ENCODE measurements at regions of chr11 and their contacts with region 1.

Region 1: DNA sequence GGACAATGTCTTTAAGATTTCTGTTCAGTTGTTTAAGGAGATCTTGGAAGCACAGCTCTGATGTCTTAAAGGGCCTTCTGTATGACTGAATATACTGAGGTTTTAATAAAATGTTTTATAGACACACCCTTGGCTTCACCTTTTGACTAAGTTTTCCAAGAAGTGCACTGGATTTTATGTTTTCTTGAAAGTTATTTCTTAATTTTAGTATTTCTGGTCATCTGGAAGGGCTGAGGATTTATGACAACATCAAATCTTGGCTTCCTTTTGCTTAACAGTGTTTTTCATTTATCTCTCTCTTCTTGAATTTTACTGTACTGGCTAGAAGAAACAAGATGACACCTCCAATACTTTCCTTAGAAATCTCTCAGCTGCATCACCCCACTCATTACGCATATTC is 2423.4 kb downstream of the LRRC4C start:
- DNase-seq: no peak
- H3K4me3 ChIP-seq: no peak overlapping the region
- H3K27ac ChIP-seq: no peak overlapping the region
- H3K4me1 ChIP-seq: no peaks in the 10 kb centered on the region
- H3K27me3 ChIP-seq: no peaks in the 10 kb centered on the region
- CTCF ChIP-seq: no peak

Region 2: GRCh38 chr11:37841016-37841415 is 1195.0 kb before region 1 on chr11:
- CTCF ChIA-PET with region 1: no interaction called
- POLR2A ChIA-PET with region 1: interaction called, 10 read pairs
- intact Hi-C with region 1: no loop called
- DNase-seq: no peak
- H3K4me3 ChIP-seq: no peak overlapping the region
- H3K27ac ChIP-seq: no peak overlapping the region
- H3K4me1 ChIP-seq: no peaks in the 10 kb centered on the region
- H3K27me3 ChIP-seq: no peaks in the 10 kb centered on the region
- CTCF ChIP-seq: no peak

Region 3: DNA sequence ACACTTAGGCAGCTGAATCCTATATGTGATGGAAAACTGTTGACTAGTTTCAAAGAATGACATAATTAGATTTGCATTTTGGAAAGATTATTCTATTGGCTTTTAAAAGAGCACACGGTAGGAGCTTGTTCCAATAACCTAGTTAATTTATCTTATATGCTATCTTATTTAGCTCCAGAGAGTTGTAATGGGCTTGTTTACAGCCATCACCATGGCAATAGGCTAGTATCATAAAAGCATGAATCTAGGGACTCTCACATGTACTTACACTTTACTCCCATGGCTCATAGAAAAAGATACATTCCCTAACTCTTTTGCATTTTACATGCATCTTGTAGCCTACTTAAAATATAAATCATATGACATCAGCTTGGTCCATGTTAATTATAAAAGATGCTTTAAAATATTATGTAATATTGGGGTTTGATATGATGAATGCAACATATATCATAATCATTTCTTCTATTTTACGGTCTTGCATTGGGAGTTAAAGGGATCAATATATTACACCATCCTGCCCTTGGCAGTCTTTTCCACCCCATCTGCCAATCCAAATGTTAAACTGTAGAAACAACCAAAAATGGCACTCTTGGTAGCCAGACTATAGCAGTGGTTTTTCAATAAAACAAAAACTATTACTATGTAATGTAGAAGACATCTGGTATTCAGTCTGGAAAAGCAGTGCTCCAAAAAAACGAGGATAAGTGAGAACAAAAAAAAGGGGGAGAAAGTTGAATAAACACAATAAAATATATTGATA is 169.4 kb after region 1 on chr11:
- CTCF ChIA-PET with region 1: no interaction called
- POLR2A ChIA-PET with region 1: no interaction called
- intact Hi-C with region 1: no loop called
- DNase-seq: no peak
- H3K4me3 ChIP-seq: no peak overlapping the region
- H3K27ac ChIP-seq: no peak overlapping the region
- H3K4me1 ChIP-seq: no peaks in the 10 kb centered on the region
- H3K27me3 ChIP-seq: no peaks in the 10 kb centered on the region
- CTCF ChIP-seq: no peak

Measured in PC-9 (cell line).